ENCODE measurements at regions of chr3 and their contacts with region 1.

Region 1: DNA sequence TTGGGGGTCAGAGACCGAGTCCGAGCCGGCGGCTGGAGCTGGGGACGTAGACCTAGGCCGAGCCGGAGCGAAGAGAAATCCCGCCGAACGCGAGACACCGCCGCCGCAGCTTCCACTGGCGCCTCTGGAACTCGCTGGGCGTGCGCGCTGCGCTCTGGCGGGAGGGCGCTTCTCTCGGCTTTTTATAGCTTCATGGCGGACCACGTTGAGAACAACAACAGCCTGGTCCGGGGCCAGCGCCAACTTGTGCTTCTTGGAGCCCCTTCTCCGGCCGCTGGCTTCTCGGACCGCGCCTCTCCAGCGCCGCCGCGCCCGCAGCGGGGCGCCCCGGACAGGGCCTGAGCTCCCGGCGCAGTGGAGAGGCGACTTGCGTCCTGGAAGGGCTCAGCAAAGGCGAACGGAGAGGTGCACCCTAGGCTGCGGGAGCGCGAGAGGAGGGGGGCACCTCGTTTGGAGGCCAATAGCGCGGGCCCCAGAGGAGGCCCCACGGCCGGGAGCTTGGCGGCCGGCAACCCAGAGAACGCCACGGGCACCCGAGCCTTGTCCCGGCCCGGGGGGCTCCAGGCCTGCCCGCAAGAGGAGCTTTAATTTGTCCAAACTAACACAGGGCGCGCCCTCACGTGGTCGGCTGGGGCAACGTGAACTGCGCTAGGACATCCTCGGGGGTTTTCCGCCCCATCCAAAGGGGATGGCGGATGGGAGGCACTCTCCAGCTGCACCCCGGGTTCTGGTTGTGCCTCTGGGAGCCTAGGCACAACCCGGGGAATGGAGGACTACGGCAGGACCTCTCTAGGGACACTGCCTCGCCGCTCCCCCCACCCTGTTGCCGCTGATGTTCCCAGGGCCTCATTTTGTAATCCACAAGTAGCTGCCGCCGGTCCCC is 37.7 kb downstream of the HMCES start:
- DNase-seq: peak; percentile 82 to 89 (median 85)
- H3K4me3 ChIP-seq: peak overlapping the region; percentile 81 to 86
- H3K4me3 Mint-ChIP-seq: peak overlapping the region; percentile 79 to 96 (median 89)
- H3K27ac ChIP-seq: peak overlapping the region; percentile 74
- H3K27ac Mint-ChIP-seq: peak overlapping the region; percentile 70 to 92 (median 87)
- H3K4me1 ChIP-seq: peaks cover 37% of the 10 kb centered on the region
- H3K4me1 Mint-ChIP-seq: peaks cover 13 to 30% (median 19%) of the 10 kb centered on the region in 4 donors
- H3K27me3 ChIP-seq: no peaks in the 10 kb centered on the region
- H3K27me3 Mint-ChIP-seq: no peaks in the 10 kb centered on the region

Region 2: GRCh38 chr3:128680602-128681368 is 635.6 kb before region 1 on chr3:
- CTCF ChIA-PET with region 1: no interaction called
- POLR2A ChIA-PET with region 1: interaction called, 19 read pairs
- intact Hi-C with region 1: no loop called
- DNase-seq: peak; percentile 96 to 97 (median 97)
- H3K4me3 ChIP-seq: peak overlapping the region; percentile 76 to 85
- H3K4me3 Mint-ChIP-seq: peak overlapping the region; percentile 87 to 98 (median 97)
- H3K27ac ChIP-seq: peak overlapping the region; percentile 89
- H3K27ac Mint-ChIP-seq: peak overlapping the region; percentile 95 to 99 (median 99)
- H3K4me1 ChIP-seq: peaks cover 27% of the 10 kb centered on the region
- H3K4me1 Mint-ChIP-seq: peaks cover 15 to 36% (median 19%) of the 10 kb centered on the region in 4 donors
- H3K27me3 ChIP-seq: no peaks in the 10 kb centered on the region
- H3K27me3 Mint-ChIP-seq: no peaks in the 10 kb centered on the region

Region 3: DNA sequence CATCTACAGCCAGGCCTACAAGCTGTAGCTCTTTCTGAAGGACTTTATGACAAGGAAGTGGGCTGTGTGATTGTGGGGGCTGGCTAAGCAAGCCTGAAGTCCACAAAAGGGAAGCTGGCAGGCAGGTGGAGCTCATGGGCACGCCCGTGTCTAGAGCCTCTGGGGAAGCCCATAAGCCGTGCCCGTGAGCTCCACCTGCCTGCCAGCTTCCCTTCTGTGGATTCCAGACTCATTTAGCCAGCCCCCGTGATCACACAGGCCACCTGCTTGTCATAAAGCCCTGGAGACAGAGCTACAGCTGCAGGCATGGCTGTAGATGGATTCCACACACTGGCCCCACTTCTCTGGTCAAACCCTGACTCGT is 300.0 kb before region 1 on chr3:
- CTCF ChIA-PET with region 1: interaction called, 3 read pairs
- POLR2A ChIA-PET with region 1: interaction called, 32 read pairs
- intact Hi-C with region 1: no loop called
- DNase-seq: peak; percentile 54 to 74 (median 59)
- H3K4me3 ChIP-seq: peak overlapping the region; percentile 41 to 54
- H3K4me3 Mint-ChIP-seq: peak overlapping the region; percentile 54 to 89 (median 83)
- H3K27ac ChIP-seq: peak overlapping the region; percentile 64
- H3K27ac Mint-ChIP-seq: peak overlapping the region; percentile 85 to 99 (median 94)
- H3K4me1 ChIP-seq: peaks cover 36% of the 10 kb centered on the region
- H3K4me1 Mint-ChIP-seq: peaks cover 32 to 54% (median 44%) of the 10 kb centered on the region in 4 donors
- H3K27me3 ChIP-seq: no peaks in the 10 kb centered on the region
- H3K27me3 Mint-ChIP-seq: no peaks in the 10 kb centered on the region

Region 4: DNA sequence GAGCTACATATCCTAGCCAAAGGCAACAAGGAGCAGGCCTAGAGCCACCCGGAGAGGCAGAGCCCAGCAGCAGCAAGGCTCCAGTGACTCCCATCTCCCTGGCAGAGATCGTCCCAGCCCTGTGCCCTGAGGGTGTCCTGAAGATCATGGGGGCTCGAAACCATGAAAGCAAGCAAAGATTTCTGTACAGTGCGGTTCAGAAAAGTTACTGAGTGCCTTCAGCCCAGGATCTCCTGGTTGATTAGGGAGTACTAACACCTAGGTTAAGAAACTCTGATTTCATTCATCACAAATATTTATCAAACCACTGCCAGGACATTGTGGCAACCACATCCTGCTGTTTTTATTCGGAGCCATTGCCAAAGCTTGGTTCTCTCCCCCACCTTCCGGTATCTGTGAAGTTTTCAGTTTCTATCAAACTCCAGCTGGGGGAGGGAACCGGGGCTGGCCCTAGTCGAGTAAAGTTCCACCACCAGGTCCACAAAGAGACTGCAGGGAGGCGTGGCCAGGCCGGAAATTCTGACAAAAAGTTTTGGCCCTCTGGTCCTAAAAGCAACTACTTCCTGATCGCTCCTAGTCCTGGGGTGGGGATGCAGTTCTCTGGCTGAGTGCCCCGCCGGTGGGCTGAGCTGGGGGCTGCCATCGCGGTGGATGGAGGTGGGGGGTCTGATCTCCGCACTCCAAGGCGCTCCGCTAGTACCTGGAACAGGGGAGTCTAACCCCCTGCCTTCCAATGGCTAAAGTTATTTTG is 195.9 kb before region 1 on chr3:
- CTCF ChIA-PET with region 1: interaction called, 6 read pairs
- POLR2A ChIA-PET with region 1: interaction called, 100 read pairs
- intact Hi-C with region 1: no loop called
- DNase-seq: peak; percentile 92 to 97 (median 95)
- H3K4me3 ChIP-seq: peak overlapping the region; percentile 73 to 79
- H3K4me3 Mint-ChIP-seq: peak overlapping the region; percentile 92 to 99 (median 94)
- H3K27ac ChIP-seq: peak overlapping the region; percentile 62
- H3K27ac Mint-ChIP-seq: peak overlapping the region; percentile 94 to 99 (median 98)
- H3K4me1 ChIP-seq: peaks cover 54% of the 10 kb centered on the region
- H3K4me1 Mint-ChIP-seq: peaks cover 34 to 70% (median 52%) of the 10 kb centered on the region in 4 donors
- H3K27me3 ChIP-seq: no peaks in the 10 kb centered on the region
- H3K27me3 Mint-ChIP-seq: no peaks in the 10 kb centered on the region

Region 5: GRCh38 chr3:129249276-129250065 is 66.9 kb before region 1 on chr3 and contains the start of gene COPG1:
- CTCF ChIA-PET with region 1: interaction called, 15 read pairs
- POLR2A ChIA-PET with region 1: interaction called, 90 read pairs
- intact Hi-C with region 1: loop called (anchors 2 kb)
- DNase-seq: peak; percentile 82 to 91 (median 88)
- H3K4me3 ChIP-seq: peak within 1 kb of the TSS; percentile 88 to 91
- H3K4me3 Mint-ChIP-seq: peak within 1 kb of the TSS; percentile 91 to 98 (median 96)
- H3K27ac ChIP-seq: peak within 1 kb of the TSS; percentile 92
- H3K27ac Mint-ChIP-seq: peak within 1 kb of the TSS; percentile 92 to 98 (median 97)
- H3K4me1 ChIP-seq: peaks cover 30% of the 10 kb centered on the region
- H3K4me1 Mint-ChIP-seq: peaks cover 21 to 64% (median 42%) of the 10 kb centered on the region in 4 donors
- H3K27me3 ChIP-seq: no peaks in the 10 kb centered on the region
- H3K27me3 Mint-ChIP-seq: no peaks in the 10 kb centered on the region
- total RNA-seq, gene COPG1: 147 TPM

Region 6: DNA sequence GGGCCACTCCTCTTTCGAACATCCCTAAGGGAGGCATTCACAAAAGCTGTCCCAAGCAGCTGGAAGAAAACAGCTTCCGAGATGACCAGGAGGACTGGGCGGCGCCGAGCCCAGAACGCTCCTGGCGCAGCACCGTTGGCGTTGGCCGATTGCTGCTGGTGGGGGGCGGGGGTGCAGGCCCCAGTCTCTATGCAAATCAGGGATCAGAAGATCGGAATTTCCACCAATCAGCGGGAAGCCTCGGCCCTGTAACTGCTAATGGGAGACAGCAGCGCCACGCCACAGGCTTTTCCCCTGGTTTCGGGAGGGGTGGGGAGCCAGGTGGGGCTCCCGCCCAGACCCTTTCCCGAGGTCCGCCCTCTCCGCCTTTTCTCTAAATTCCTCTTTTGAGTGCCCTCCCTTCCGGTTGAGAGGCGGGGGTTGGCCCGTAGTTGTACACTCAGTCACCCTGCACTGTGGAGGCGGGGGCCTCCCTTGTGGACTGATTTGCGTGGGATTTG is 10.7 kb before region 1 on chr3:
- CTCF ChIA-PET with region 1: interaction called, 22 read pairs
- POLR2A ChIA-PET with region 1: interaction called, 83 read pairs
- intact Hi-C with region 1: no loop called
- DNase-seq: no peak
- H3K4me3 ChIP-seq: no peak overlapping the region
- H3K4me3 Mint-ChIP-seq: peak overlapping the region in 2 of 8 donors; percentile 25 to 29
- H3K27ac ChIP-seq: peak overlapping the region; percentile 6
- H3K27ac Mint-ChIP-seq: peak overlapping the region; percentile 19 to 87 (median 65)
- H3K4me1 ChIP-seq: peaks cover 3% of the 10 kb centered on the region
- H3K4me1 Mint-ChIP-seq: peaks cover 14 to 24% (median 15%) of the 10 kb centered on the region in 4 donors
- H3K27me3 ChIP-seq: no peaks in the 10 kb centered on the region
- H3K27me3 Mint-ChIP-seq: no peaks in the 10 kb centered on the region

Region 7: DNA sequence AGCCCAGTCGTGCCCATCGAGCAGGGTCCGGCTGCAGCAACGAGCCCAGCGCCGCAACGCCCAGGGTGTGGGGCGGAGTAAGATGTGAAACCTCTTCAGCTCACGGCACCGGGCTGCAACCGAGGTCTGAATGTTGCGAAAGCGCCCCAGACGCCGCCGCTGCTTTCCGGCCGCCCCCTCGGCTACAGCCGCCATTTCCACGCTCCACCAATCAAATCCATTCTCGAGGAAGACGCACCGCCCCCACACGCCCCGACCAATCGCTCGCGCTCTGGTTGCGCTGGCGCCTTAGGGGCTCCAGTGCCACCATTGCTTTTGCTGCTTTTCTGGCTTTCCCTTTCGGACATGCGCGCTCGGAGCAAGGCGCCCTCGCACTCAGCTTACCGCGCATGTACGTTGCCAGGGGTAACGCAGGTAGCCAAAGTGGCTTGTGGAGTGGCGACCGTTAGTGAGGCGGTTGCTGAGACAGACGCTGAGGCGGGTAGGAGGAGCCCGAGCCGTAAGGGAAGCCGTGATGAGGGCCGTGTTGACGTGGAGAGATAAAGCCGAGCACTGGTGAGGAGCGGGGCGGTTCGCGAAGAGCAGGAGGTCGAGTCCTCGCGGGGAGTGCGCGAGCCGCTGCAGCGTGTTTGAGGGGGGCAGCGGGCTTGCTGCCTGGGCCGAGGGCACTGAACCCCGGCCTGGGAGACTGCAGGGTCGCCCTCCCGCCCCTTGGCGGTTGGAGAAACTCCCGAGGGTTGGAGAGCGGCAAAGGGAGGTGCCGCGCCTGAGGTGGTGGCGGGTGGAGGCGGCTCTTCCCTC is 123.6 kb after region 1 on chr3 and contains the starts of genes IFT122 and MBD4:
- CTCF ChIA-PET with region 1: interaction called, 3 read pairs
- POLR2A ChIA-PET with region 1: interaction called, 42 read pairs
- intact Hi-C with region 1: loop called (anchors 1 kb)
- DNase-seq: peak; percentile 98 to 100 (median 100)
- H3K4me3 ChIP-seq: peak within 1 kb of the TSS; percentile 98 to 100
- H3K4me3 Mint-ChIP-seq: peak within 1 kb of the TSS; percentile 90 to 99 (median 94)
- H3K27ac ChIP-seq: peak within 1 kb of the TSS; percentile 91
- H3K27ac Mint-ChIP-seq: peak within 1 kb of the TSS; percentile 94 to 99 (median 98)
- H3K4me1 ChIP-seq: peaks cover 73% of the 10 kb centered on the region
- H3K4me1 Mint-ChIP-seq: peaks cover 45 to 81% (median 68%) of the 10 kb centered on the region in 4 donors
- H3K27me3 ChIP-seq: no peaks in the 10 kb centered on the region
- H3K27me3 Mint-ChIP-seq: no peaks in the 10 kb centered on the region
- total RNA-seq, gene IFT122: 20.0 to 21.8 TPM
- total RNA-seq, gene MBD4: 52.4 to 58.0 TPM

Region 8: DNA sequence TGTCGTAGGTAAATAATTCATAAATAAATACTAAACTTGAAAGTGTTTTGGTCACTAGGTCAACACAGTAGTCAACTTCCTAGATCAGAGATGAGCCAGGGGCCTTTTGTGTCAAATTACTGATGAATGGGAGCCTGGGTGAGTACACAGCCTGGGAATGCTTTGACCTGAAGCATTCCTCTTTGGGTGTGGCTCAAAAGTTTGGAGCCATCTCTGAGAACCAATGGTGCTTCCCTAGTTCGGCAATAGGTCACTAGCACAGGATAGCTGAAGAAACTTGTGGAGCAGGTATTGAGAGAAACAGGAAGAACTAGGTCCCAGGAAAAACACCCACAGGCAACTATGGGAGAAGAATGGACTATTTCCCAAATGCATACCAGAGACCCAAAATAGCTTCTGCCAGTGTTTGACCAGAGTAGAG is 346.7 kb after region 1 on chr3:
- CTCF ChIA-PET with region 1: no interaction called
- POLR2A ChIA-PET with region 1: no interaction called
- intact Hi-C with region 1: no loop called
- DNase-seq: no peak
- H3K4me3 ChIP-seq: no peak overlapping the region
- H3K4me3 Mint-ChIP-seq: no peak overlapping the region
- H3K27ac ChIP-seq: no peak overlapping the region
- H3K27ac Mint-ChIP-seq: no peak overlapping the region
- H3K4me1 ChIP-seq: no peaks in the 10 kb centered on the region
- H3K4me1 Mint-ChIP-seq: peaks cover 5 to 20% (median 13%) of the 10 kb centered on the region in 4 donors
- H3K27me3 ChIP-seq: no peaks in the 10 kb centered on the region
- H3K27me3 Mint-ChIP-seq: no peaks in the 10 kb centered on the region

Measured in CD4-positive, alpha-beta memory T cell (primary cell).